ENCODE measurements at regions of chr4 and their contacts with region 1.

Region 1: GRCh38 chr4:1249148-1249730 is 309 bp upstream of the CTBP1 start:
- DNase-seq: peak; percentile 72 to 97 (median 83)
- ATAC-seq: peak; percentile 68
- H3K4me3 ChIP-seq: peak overlapping the region; percentile 86
- H3K4me3 Mint-ChIP-seq: peak overlapping the region; percentile 97
- H3K27ac ChIP-seq: peak overlapping the region; percentile 89 to 92
- H3K27ac Mint-ChIP-seq: peak overlapping the region; percentile 98
- H3K4me1 ChIP-seq: peaks cover 79% of the 10 kb centered on the region
- H3K4me1 Mint-ChIP-seq: peaks cover 69% of the 10 kb centered on the region
- H3K27me3 ChIP-seq: no peaks in the 10 kb centered on the region
- H3K27me3 Mint-ChIP-seq: no peaks in the 10 kb centered on the region
- CTCF ChIP-seq: no peak

Region 2: DNA sequence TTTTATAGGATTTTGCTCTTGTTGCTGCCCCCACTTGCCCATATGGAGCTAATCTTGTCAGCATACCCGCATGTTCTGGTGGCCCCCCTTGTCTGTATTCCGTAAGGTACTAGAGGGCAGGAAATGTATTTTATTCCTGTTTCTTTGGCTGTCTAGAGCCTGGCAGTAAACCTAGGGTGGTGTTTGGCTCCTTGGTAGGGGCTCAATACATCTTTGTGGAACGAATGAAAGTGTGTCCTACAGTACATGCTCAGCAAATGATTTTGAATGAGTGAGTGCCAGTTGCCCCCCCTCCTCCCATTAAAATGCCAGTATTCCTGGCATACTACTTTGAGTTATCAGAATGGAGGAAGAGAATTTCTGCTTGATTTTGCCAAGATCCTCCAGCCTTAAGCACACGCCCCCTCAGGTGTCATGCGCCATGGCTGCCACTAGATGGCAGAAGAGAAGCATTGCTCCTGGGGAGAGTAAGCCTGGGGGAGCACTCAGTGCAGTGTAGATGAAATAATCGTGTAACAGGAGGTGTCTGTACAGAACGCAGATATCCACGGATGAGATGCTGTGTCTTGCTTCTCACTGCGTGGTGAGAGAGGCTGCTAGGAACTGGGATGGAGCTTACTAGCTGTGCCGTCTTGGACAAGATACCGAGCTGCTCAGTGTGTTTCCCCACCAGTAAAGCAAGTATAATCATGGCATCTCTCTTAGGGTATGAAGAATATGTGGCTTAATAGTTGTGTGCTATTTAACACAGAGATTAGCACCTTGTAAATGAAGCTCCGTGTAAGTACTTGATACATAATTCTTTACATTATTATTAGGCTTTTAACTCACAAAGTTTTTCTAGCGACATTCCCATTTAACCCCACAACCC is 118.7 kb before region 1 on chr4:
- CTCF ChIA-PET with region 1: no interaction called
- POLR2A ChIA-PET with region 1: interaction called, 5 read pairs
- intact Hi-C with region 1: loop called in 1 of 2 experiments (anchors 5 kb)
- DNase-seq: peak; percentile 64 to 89 (median 72)
- ATAC-seq: peak; percentile 100
- H3K4me3 ChIP-seq: no peak overlapping the region
- H3K4me3 Mint-ChIP-seq: no peak overlapping the region
- H3K27ac ChIP-seq: no peak overlapping the region
- H3K27ac Mint-ChIP-seq: no peak overlapping the region
- H3K4me1 ChIP-seq: peaks cover 3% of the 10 kb centered on the region
- H3K4me1 Mint-ChIP-seq: peaks cover 5% of the 10 kb centered on the region
- H3K27me3 ChIP-seq: peaks cover 0 to 5% of the 10 kb centered on the region in 2 experiments
- H3K27me3 Mint-ChIP-seq: peaks cover 8% of the 10 kb centered on the region
- CTCF ChIP-seq: peak; percentile 99

Region 3: DNA sequence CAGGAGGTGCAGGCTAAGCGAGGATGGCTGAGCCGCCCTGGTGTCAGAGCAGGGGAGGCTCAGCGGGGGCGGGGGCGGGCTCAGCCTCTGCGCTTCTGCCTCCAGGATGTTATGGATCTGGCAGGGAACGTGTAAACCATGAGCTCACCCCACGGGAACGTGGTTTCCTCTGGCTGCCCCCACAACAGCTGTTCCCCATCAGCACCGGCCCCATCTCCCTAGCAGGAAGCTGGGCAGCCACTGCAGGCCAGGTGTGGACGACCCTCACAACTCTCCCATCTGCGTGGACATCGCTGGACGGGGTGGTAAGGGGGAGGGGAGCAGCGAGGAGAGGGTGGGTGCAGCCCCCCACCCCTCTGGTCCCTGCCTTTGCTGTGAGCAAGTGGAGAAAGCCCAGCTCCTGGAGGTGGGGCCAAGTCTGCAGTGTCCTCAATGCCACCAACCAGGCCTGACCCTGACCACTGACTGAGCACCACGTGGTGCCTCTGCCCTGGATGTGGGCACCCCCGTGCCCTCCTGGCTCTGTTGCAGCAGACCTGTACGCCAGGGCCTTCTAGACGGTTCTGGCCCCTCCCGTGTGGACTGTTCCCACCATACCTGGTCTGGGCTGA is 48.7 kb before region 1 on chr4:
- CTCF ChIA-PET with region 1: no interaction called
- POLR2A ChIA-PET with region 1: interaction called, 43 read pairs
- intact Hi-C with region 1: loop called (anchors 2 to 5 kb)
- DNase-seq: peak in 4 of 14 experiments; percentile 32 to 58 (median 37)
- ATAC-seq: no peak
- H3K4me3 ChIP-seq: peak overlapping the region; percentile 66
- H3K4me3 Mint-ChIP-seq: peak overlapping the region; percentile 83
- H3K27ac ChIP-seq: peak overlapping the region; percentile 71 to 80
- H3K27ac Mint-ChIP-seq: peak overlapping the region; percentile 97
- H3K4me1 ChIP-seq: peaks cover 65% of the 10 kb centered on the region
- H3K4me1 Mint-ChIP-seq: peaks cover 30% of the 10 kb centered on the region
- H3K27me3 ChIP-seq: no peaks in the 10 kb centered on the region
- H3K27me3 Mint-ChIP-seq: no peaks in the 10 kb centered on the region
- CTCF ChIP-seq: no peak

Region 4: GRCh38 chr4:1289207-1290164 is 40.2 kb after region 1 on chr4 and contains the start of gene MAEA:
- CTCF ChIA-PET with region 1: no interaction called
- POLR2A ChIA-PET with region 1: interaction called, 41 read pairs
- intact Hi-C with region 1: loop called (anchors 1 to 2 kb)
- DNase-seq: peak; percentile 94 to 98 (median 96)
- ATAC-seq: peak; percentile 99
- H3K4me3 ChIP-seq: peak within 1 kb of the TSS; percentile 73
- H3K4me3 Mint-ChIP-seq: peak within 1 kb of the TSS; percentile 93
- H3K27ac ChIP-seq: peak within 1 kb of the TSS; percentile 60 to 83
- H3K27ac Mint-ChIP-seq: peak within 1 kb of the TSS; percentile 93
- H3K4me1 ChIP-seq: peaks cover 46% of the 10 kb centered on the region
- H3K4me1 Mint-ChIP-seq: peaks cover 45% of the 10 kb centered on the region
- H3K27me3 ChIP-seq: no peaks in the 10 kb centered on the region
- H3K27me3 Mint-ChIP-seq: no peaks in the 10 kb centered on the region
- CTCF ChIP-seq: no peak
- total RNA-seq, gene MAEA: 61.5 to 63.2 TPM

Region 5: DNA sequence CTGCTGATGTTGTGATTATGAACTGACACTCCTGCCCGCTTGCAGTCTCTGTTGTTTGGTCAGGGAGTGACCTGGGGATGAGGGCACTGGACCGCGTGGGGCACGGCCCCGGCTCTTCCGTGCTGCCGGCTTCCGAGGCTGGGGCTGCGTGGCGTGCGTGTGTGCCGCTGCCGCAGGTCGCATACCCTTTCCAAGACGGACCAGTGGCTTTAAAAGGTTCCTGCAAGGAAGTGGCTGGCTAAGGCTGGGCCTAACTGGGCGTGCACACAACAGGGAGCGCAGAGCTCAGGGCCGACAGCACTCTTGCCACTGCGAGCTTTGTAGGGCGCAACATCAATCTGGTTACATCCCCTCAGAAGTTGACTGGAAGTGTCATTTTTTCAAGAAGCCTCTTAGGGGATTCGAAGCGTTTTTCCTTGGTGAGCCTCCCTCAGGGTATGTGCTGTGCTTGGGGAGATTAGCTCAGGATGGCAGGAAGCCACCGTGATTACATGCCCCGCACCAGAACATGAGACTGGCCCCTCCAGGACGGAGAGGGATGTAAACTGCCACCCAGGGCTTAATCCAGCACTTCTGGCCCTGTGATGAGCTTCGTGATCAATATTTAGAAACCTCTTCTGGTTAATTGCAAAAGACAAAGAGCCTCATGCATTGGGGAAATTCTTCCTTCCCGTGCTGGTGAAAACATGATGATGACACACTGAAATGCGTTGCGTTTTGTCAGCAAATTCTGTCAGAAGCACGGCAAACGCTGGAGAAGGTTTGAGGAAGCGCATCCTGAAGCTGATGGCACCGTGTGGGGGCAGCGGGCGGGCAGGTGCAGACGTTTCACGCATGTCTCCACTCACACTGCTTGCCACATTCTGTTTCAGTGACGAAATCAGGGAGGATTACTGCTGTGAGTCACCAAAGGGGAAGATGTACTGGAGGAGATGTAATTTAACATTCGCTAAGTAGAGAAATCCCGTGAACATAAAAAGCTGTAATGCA is 51.5 kb after region 1 on chr4:
- CTCF ChIA-PET with region 1: no interaction called
- POLR2A ChIA-PET with region 1: no interaction called
- intact Hi-C with region 1: no loop called
- DNase-seq: peak in 5 of 14 experiments; percentile 34 to 83 (median 47)
- ATAC-seq: peak; percentile 83
- H3K4me3 ChIP-seq: no peak overlapping the region
- H3K4me3 Mint-ChIP-seq: peak overlapping the region; percentile 47
- H3K27ac ChIP-seq: peak overlapping the region in 1 of 2 donors; percentile 52
- H3K27ac Mint-ChIP-seq: peak overlapping the region; percentile 72
- H3K4me1 ChIP-seq: peaks cover 39% of the 10 kb centered on the region
- H3K4me1 Mint-ChIP-seq: peaks cover 56% of the 10 kb centered on the region
- H3K27me3 ChIP-seq: no peaks in the 10 kb centered on the region
- H3K27me3 Mint-ChIP-seq: no peaks in the 10 kb centered on the region
- CTCF ChIP-seq: no peak

Region 6: DNA sequence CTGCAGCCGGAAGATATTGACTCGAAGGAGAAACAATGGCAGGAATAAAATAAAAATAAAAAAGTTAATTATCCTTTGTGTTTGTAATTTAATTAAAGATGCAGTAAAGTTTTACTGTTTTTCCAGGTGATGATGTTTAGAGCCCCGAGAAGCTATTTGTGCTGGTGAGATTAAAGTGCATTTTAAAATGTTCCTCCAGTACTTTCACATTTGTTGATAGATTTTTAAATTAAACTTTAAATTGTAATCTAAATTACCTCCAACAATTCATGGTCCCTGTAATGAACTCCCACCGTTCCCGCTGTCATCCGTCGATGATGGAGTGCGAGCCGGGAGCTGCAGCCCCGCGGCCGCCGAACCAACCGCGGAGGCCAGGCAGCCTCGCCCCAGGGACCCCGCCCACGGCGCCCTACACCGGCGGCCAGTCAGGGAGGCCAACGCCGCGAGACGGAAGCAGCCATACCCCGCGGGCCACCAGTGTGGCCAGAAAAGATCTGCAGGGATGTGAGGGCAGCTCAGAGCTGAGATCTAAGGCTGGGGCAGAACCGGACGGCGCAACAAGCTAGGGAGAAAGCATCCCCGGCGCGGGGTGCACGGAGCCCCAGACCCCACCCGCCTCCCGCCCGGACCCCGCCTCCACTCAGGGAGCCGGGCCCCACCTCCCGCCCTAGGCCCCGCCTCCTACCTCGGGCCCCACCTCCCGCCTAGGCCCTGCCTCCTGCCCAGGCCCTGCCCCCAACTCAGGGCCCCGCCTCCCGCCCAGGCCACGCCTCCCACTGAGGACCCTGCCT is 330.9 kb after region 1 on chr4:
- CTCF ChIA-PET with region 1: no interaction called
- POLR2A ChIA-PET with region 1: interaction called, 3 read pairs
- intact Hi-C with region 1: loop called in 1 of 2 experiments (anchors 10 kb)
- DNase-seq: peak; percentile 88 to 97 (median 93)
- ATAC-seq: peak; percentile 82
- H3K4me3 ChIP-seq: peak overlapping the region; percentile 73
- H3K4me3 Mint-ChIP-seq: peak overlapping the region; percentile 86
- H3K27ac ChIP-seq: peak overlapping the region in 1 of 2 donors; percentile 65
- H3K27ac Mint-ChIP-seq: peak overlapping the region; percentile 63
- H3K4me1 ChIP-seq: peaks cover 14% of the 10 kb centered on the region
- H3K4me1 Mint-ChIP-seq: no peaks in the 10 kb centered on the region
- H3K27me3 ChIP-seq: no peaks in the 10 kb centered on the region
- H3K27me3 Mint-ChIP-seq: no peaks in the 10 kb centered on the region
- CTCF ChIP-seq: no peak

Region 7: GRCh38 chr4:1870578-1871443 is 621.6 kb after region 1 on chr4 and contains the start of gene NSD2:
- CTCF ChIA-PET with region 1: no interaction called
- POLR2A ChIA-PET with region 1: interaction called, 3 read pairs
- intact Hi-C with region 1: loop called in 1 of 2 experiments (anchors 2 kb)
- DNase-seq: peak; percentile 80 to 97 (median 88)
- ATAC-seq: peak; percentile 63
- H3K4me3 ChIP-seq: peak within 1 kb of the TSS; percentile 63
- H3K4me3 Mint-ChIP-seq: peak within 1 kb of the TSS; percentile 92
- H3K27ac ChIP-seq: peak within 1 kb of the TSS; percentile 79 to 94
- H3K27ac Mint-ChIP-seq: peak within 1 kb of the TSS; percentile 89
- H3K4me1 ChIP-seq: peaks cover 29% of the 10 kb centered on the region
- H3K4me1 Mint-ChIP-seq: peaks cover 34% of the 10 kb centered on the region
- H3K27me3 ChIP-seq: no peaks in the 10 kb centered on the region
- H3K27me3 Mint-ChIP-seq: peaks cover 5% of the 10 kb centered on the region
- CTCF ChIP-seq: no peak
- total RNA-seq, gene NSD2: 42.4 to 45.8 TPM

Region 8: GRCh38 chr4:1899149-1900086 is 650.2 kb after region 1 on chr4:
- CTCF ChIA-PET with region 1: no interaction called
- POLR2A ChIA-PET with region 1: no interaction called
- intact Hi-C with region 1: no loop called
- DNase-seq: peak; percentile 56 to 90 (median 63)
- ATAC-seq: peak; percentile 98
- H3K4me3 ChIP-seq: no peak overlapping the region
- H3K4me3 Mint-ChIP-seq: no peak overlapping the region
- H3K27ac ChIP-seq: no peak overlapping the region
- H3K27ac Mint-ChIP-seq: no peak overlapping the region
- H3K4me1 ChIP-seq: peaks cover 9% of the 10 kb centered on the region
- H3K4me1 Mint-ChIP-seq: peaks cover 10% of the 10 kb centered on the region
- H3K27me3 ChIP-seq: no peaks in the 10 kb centered on the region
- H3K27me3 Mint-ChIP-seq: no peaks in the 10 kb centered on the region
- CTCF ChIP-seq: peak; percentile 90